Colonic mucosa (tissue), 4 donors: ENCODE measurements at regions of chr6 and their contacts with region 1.

Region 1: DNA sequence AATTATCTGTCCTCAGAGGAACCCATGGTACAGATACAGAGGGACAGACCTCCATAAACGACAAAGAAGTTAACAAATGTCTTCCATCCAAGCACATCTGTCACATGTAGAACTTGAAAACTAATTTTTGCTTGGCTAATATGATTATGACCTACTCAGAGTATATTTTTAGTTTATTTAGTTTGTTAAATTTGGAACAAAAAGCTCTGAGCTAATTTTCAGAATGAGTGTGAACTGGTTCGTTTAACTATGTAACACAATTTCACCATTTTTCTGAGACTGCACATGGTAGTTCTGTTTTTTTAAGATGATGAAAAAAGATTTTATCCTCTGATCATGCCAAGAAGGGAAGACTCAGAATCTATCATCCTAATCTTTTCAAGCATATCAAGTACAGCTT is 34.4 kb upstream of the PREP start:
- DNase-seq: no peak
- H3K4me3 ChIP-seq: no peak overlapping the region
- H3K27ac ChIP-seq: no peak overlapping the region
- H3K4me1 ChIP-seq: no peaks in the 10 kb centered on the region
- H3K27me3 ChIP-seq: no peaks in the 10 kb centered on the region
- CTCF ChIP-seq: no peak

Region 2: DNA sequence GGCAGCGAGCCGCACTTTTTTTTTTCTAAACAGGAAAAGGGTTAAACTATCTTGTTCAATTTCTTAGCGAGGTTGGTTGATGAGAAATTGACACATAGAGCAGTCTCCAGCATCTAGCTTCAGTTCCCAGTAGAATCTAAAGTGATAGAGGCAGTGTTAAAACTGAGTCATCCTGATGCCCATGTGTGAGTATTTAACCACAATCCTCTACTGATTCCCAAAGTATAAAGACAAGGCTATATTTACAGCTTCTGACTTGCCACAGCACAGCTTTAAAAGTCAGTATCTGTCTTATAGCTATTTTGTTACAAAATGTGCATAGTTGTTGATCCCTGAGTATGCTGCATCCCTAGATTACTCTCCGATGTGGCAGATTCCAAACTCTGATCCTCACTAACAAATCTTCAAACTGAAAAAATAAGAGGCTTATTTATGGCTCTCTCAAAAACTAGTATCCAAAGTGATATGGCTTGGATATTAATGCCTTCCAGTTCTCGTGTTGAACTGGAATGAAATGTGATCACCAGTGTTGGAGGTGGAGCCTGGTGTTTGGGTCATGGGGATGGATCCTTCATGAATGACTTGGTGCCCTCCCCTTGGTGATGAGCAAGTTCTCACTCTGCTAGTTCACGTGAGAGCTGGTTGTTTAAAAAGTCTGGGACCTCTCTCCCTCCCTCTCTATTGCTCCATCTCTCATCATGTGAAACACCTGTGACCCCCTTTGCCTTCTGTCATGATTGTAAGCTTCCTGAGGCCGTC is 244.3 kb before region 1 on chr6:
- intact Hi-C with region 1: no loop called
- DNase-seq: no peak
- H3K4me3 ChIP-seq: no peak overlapping the region
- H3K27ac ChIP-seq: no peak overlapping the region
- H3K4me1 ChIP-seq: no peaks in the 10 kb centered on the region
- H3K27me3 ChIP-seq: no peaks in the 10 kb centered on the region
- CTCF ChIP-seq: no peak

Region 3: DNA sequence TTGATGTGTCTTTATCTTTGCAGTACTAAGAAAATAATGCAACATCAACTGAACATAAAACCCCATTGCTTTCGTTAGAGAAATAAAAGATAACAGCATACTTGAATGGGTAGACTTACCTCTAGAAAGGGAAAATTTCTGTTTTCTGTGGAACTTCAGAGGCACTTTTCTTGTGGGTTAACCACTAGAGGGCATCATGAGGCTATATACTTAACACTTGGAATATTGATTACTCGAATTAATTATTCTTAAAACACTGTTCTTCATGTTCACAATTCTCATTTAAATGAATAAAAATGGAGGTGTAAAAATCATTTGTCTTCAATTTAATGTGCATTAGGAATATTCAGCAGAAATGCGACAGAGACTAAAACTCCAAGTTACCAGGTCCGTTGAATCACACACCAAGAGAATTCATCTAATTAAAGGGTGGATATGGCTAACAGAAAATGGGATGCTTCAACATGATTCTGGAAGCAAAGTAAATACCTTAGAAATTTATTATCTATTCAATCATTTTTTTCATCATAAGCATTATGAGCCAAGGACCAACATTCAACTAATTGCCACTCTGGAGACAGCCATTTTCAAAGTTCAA is 296.4 kb after region 1 on chr6:
- intact Hi-C with region 1: no loop called
- DNase-seq: no peak
- H3K4me3 ChIP-seq: no peak overlapping the region
- H3K27ac ChIP-seq: no peak overlapping the region
- H3K4me1 ChIP-seq: no peaks in the 10 kb centered on the region
- H3K27me3 ChIP-seq: no peaks in the 10 kb centered on the region
- CTCF ChIP-seq: peak; percentile 62

Region 4: GRCh38 chr6:106223300-106223930 is 786.2 kb after region 1 on chr6:
- intact Hi-C with region 1: loop called (anchors 5 kb)
- DNase-seq: peak; percentile 79
- H3K4me3 ChIP-seq: no peak overlapping the region
- H3K27ac ChIP-seq: no peak overlapping the region
- H3K4me1 ChIP-seq: no peaks in the 10 kb centered on the region
- H3K27me3 ChIP-seq: no peaks in the 10 kb centered on the region
- CTCF ChIP-seq: peak; percentile 56